ENCODE measurements at regions of chr1 and their contacts with region 1.

Region 1: DNA sequence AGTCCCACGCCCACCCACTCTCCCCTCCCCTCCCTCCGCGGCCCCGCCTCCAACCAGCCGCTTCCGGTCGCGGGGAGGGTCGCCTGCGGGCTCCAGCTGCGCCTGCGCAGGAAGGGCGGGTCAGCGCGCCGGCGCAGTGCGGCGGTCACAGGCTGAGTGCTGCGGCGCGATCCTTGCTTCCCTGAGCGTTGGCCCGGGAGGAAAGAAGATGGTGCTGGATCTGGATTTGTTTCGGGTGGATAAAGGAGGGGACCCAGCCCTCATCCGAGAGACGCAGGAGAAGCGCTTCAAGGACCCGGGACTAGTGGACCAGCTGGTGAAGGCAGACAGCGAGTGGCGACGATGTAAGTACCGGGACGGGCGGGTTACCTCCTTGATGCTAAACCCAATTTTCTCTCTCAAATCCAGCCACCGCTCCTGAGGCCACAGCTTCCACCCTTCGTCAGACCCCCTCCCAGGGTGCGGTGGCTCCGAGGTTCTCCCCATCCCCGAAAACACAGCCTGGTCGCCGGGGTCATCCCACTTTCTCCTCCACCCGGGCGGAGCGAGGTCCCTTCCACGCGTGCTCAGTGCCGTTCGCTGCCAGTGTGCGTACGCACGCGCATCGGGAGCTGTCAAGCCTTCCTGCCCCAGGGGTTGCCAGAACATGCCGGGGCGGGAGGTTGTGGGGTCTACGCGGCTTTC is at the start of gene SARS1:
- DNase-seq: peak; percentile 99

Region 2: DNA sequence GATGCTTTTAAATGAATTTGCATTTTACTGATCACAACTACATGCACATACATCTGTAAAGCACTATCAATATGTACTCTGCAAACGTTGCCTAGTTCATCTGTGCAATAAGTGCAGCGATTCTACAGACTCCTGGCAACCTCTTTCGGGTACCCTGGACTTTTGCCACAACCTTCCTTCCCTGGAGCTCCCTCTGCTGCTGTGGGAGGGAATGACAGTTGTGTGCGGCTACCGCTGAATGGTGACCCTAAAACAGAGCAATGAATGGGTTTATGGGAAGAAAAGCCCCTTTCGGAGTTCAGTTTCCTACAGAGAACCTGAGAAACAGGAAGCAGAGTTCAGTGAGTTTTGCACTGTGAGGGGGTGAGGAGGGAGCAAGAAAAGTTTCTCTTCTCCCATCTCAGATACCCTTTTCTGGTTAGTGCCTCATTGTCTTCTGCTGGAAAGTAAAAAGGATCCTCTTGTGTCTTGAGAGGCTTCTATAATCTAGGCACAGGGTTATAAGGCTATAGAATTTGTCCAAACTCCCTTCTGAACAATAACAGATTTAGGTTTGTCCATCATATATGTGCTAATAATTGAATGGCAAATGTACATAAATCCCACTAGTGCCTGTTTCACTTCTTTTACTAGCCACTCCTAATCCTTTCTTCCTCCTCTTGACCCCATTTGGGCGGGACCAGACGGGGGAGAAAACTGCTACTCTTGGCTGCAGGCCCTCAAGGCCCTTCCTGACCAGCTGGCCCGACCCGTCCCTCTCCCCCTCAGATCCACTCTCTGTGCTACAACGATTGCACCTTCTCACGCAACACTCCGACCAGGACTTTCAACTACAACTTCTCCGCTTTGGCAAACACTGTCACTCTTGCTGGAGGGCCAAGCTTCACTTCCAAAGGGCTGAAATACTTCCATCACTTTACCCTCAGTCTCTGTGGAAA is 20.0 kb before region 1 on chr1:
- CTCF ChIA-PET with region 1: interaction called, 3 read pairs
- POLR2A ChIA-PET with region 1: interaction called, 17 read pairs
- DNase-seq: peak; percentile 87

Region 3: GRCh38 chr1:109226078-109226445 is 12.1 kb after region 1 on chr1:
- CTCF ChIA-PET with region 1: no interaction called
- POLR2A ChIA-PET with region 1: interaction called, 29 read pairs
- DNase-seq: no peak

Region 4: DNA sequence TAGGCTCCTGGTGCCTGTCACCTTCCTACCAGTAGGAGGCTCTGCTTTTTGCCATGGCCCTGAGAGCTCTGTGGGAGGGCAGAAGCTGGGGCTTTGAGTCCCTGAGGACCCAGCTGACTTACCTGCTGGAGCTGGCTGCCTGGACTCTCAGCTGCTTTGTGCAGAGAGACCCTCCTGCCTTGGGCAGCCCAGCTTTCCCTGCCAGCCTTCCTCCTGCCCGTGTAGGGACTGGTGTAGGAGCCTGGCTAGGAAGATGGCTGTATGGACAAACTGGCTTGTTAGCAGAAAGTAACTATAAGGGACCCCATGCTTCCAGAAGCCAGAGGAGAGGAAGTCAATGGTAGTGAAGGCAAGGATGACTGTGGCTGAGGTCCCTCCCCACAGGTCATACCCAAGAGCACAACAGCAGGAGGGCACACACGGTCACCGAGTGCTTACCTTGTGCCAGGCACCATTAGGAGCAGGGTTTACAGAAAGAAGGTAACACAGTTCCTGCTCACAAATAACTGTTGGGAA is 25.7 kb after region 1 on chr1:
- CTCF ChIA-PET with region 1: interaction called, 8 read pairs
- POLR2A ChIA-PET with region 1: interaction called, 28 read pairs
- DNase-seq: peak; percentile 78

Region 5: GRCh38 chr1:109248797-109249642 is 35.1 kb after region 1 on chr1 and contains the start of gene CELSR2:
- CTCF ChIA-PET with region 1: interaction called, 4 read pairs
- POLR2A ChIA-PET with region 1: interaction called, 13 read pairs
- DNase-seq: peak; percentile 96

Region 6: DNA sequence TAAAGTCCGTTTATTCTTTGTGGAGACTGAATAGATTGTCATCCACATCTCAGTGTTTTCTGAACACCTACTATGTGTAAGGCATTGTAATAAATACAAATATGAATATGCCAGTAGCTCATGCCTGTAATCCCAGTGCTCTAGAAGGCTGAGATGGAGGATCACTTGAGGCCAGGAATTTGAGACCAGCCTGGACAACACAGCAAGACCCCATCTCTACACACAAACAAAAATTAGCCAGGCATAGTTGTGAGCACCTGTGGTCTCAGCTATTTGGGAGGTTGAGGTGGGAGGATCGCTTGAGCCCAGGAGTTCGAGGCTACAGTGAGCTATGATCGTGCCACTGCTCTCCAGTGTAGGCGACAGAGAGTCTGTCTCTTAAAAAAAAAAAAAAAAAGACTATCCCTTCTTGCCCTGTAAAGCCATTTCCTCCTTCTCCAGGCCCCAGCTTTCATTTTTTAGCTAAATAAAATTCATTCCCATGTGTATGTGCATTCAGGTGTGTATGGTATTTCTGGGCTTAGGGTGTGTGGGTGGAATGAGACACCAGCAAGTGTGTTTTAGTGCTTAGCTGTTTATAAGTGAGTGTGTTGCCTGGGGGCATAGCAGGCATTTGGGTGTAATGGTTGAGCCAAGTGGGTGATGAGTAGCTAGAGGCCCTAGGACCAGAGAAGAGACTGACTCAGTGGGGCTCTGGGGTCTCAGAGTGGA is 43.2 kb after region 1 on chr1:
- CTCF ChIA-PET with region 1: no interaction called
- POLR2A ChIA-PET with region 1: interaction called, 13 read pairs
- DNase-seq: no peak

Region 7: GRCh38 chr1:109282952-109283747 is 69.2 kb after region 1 on chr1 and contains the start of gene PSRC1:
- CTCF ChIA-PET with region 1: no interaction called
- POLR2A ChIA-PET with region 1: interaction called, 11 read pairs
- DNase-seq: peak; percentile 99

Measured in HEK293T (cell line).